GM10248 (cell line): ENCODE measurements at regions of chr3 and their contacts with region 1.

Region 1: GRCh38 chr3:46449755-46450552 is 14.8 kb downstream of the LTF start:
- DNase-seq: no peak
- CTCF ChIP-seq: peak; percentile 29

Region 2: DNA sequence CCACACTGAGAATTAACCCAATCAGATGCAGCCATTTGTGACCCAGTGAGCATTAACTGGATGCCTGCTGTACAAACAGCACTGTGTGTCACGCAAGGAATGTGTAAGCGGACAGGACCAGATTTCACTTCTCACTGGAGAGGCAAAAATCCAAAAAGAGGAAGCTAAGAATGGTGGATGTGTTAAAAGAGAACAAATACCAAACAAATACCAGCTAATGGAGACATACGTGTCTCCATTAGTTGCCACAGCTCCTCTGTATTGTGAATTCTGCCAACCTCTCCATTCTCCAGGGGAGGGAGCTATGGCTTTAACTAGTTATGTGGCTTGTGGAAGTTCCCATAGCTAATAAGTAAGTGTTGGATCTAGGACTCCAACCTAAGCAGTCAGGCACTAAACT is 12.2 kb after region 1 on chr3:
- CTCF ChIA-PET with region 1: interaction called, 11 read pairs
- POLR2A ChIA-PET with region 1: no interaction called
- DNase-seq: no peak
- CTCF ChIP-seq: no peak

Region 3: GRCh38 chr3:46469680-46470357 is 19.9 kb after region 1 on chr3:
- CTCF ChIA-PET with region 1: interaction called, 11 read pairs
- POLR2A ChIA-PET with region 1: no interaction called
- DNase-seq: no peak
- CTCF ChIP-seq: no peak